HepG2 (cell line): ENCODE measurements at regions of chr6 and their contacts with region 1.

Region 1: GRCh38 chr6:43228951-43229802 is at the start of gene DNPH1:
- DNase-seq: peak; percentile 59
- ATAC-seq: peak; percentile 95
- H3K4me3 ChIP-seq: peak within 1 kb of the TSS; percentile 69 to 82 (median 81)
- H3K27ac ChIP-seq: peak within 1 kb of the TSS; percentile 49
- H3K4me1 ChIP-seq: peaks cover 27% of the 10 kb centered on the region
- H3K27me3 ChIP-seq: peaks cover 0 to 18% of the 10 kb centered on the region in 2 experiments; a peak in 2 of 5 replicates
- CTCF ChIP-seq: peak; percentile 88
- EP300 ChIP-seq: 0 out of 4 replicates have a peak, but pooled peaks of 1 of the 2 experiments have one; percentile 24
- POLR2A ChIP-seq: peak; percentile 79 to 84
- RAD21 ChIP-seq: peak; percentile 97
- total RNA-seq, gene DNPH1: 75.0 and 75.1 TPM in 2 replicates

Region 2: GRCh38 chr6:43174263-43175112 is 54.7 kb before region 1 on chr6:
- CTCF ChIA-PET with region 1: no interaction called
- POLR2A ChIA-PET with region 1: interaction called, 12 read pairs
- in situ Hi-C with region 1: no loop called
- intact Hi-C with region 1: loop called (anchors 1 kb)
- DNase-seq: peak; percentile 99
- ATAC-seq: peak; percentile 76
- H3K4me3 ChIP-seq: peak overlapping the region; percentile 3 to 97 (median 95); a peak in 4 of 6 replicates
- H3K27ac ChIP-seq: peak overlapping the region; percentile 57
- H3K4me1 ChIP-seq: peaks cover 37% of the 10 kb centered on the region
- H3K27me3 ChIP-seq: no peaks in the 10 kb centered on the region; a peak in 1 of 5 replicates
- CTCF ChIP-seq: peak; percentile 39
- EP300 ChIP-seq: no peak
- POLR2A ChIP-seq: peak in 1 of 2 experiments; percentile 60; a peak in 1 of 4 replicates
- RAD21 ChIP-seq: peak; percentile 49; the same call in 1 of the 2 replicates

Region 3: DNA sequence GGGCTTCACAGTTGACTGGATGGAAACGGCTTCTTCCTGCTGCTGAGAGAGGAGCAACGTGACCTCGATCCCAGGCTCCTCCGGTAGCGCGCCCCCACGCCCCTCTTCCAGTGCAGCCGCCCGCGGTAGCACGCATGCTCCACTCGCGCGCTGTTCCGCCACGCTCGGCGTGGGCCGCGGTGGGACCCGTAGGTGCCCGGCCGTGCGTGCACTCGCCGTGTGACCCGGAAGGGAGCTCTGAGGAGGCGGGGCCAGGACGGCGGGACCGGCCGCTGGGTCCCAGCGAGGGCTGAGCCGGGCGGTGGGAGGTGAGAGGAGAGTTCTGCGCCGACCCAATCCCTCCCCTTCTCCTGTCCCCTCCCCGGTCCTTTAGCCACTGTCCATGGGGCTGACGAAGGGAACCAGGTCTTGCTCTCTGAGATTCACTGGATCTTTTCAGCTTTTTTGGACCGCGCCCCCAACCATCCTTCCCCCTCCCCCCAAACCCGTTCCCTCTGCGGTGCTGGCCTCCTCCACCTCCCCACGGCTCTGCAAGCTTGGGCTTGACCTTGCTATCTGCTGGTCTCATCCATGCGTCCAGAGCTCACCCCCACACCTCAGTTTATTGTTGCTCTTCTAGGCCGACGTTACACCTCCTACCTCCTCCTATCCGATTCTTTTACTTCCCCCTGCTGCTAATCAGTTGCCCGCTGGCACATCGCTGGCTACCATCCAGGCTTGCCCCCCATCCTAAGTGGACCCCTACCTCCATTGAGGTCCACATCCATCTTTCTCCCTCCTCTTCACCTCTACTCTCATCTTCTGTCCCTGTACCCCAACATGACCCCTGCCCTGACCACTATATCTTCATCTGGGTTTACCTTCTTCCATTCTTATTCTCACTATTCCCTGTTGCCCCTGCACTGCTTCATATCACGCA is 47.0 kb before region 1 on chr6 and contains the start of gene CUL9:
- CTCF ChIA-PET with region 1: no interaction called
- POLR2A ChIA-PET with region 1: interaction called, 11 read pairs
- in situ Hi-C with region 1: no loop called
- intact Hi-C with region 1: no loop called
- DNase-seq: peak; percentile 60
- ATAC-seq: peak; percentile 95
- H3K4me3 ChIP-seq: peak within 1 kb of the TSS; percentile 73 to 83 (median 78)
- H3K27ac ChIP-seq: peak within 1 kb of the TSS; percentile 58
- H3K4me1 ChIP-seq: peaks cover 22% of the 10 kb centered on the region
- H3K27me3 ChIP-seq: no peaks in the 10 kb centered on the region; a peak in 1 of 5 replicates
- CTCF ChIP-seq: peak; percentile 56
- EP300 ChIP-seq: peak in 1 of 2 experiments; percentile 23; a peak in 1 of 4 replicates
- POLR2A ChIP-seq: peak; percentile 62 to 86; a peak in 3 of 4 replicates
- RAD21 ChIP-seq: peak; percentile 69
- total RNA-seq, gene CUL9: 10.5 and 11.4 TPM in 2 replicates

Region 4: DNA sequence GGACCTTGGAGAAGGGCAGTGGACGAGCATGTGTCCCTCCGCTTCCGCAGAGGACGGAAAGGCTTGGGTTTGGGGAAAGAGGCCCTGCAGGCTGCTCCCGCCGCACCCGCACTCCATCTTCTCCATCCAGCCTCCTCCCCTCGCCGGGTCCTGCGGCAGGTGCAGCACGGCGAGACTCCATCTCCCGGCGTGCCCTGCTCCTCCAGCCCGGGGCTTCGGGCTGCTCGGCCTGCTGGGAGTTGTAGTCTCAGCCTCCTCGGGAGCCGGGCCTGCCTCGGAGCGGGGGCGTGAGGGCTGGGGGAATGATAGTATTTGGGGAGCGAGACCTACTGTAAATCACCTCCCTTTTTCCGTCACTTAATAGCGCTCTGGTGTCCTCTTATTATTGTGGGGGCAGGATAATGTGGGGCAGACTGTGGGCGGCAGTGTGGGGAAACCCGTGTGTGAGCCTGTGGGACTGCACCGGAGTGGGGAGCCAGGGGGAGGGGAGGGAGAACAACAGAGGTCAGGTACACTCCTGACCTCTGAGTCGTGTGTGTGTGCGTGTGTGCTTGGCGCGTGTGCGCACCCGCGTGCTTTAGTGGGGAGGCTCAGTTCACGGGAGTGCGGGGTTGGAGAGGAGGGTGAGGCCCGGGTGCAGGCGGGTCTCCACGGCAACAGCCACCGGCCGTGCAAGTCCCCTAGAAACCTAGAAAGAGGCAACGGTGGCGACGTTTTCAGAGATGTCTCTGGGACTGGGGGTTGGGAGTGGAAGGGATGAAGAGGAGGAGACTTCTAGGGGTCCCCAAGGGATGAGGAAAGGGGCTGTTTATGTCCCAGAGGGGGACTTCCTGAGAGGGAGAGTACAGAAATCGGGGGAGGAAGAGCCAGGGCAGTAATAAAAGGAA is 18.2 kb after region 1 on chr6:
- CTCF ChIA-PET with region 1: no interaction called
- POLR2A ChIA-PET with region 1: interaction called, 12 read pairs
- in situ Hi-C with region 1: no loop called
- intact Hi-C with region 1: no loop called
- DNase-seq: peak; percentile 58
- ATAC-seq: peak; percentile 96
- H3K4me3 ChIP-seq: peak overlapping the region; percentile 48 to 75 (median 58)
- H3K27ac ChIP-seq: no peak overlapping the region
- H3K4me1 ChIP-seq: peaks cover 38% of the 10 kb centered on the region
- H3K27me3 ChIP-seq: peaks cover 17 to 79% of the 10 kb centered on the region in 2 experiments
- CTCF ChIP-seq: peak; percentile 35
- EP300 ChIP-seq: 0 out of 4 replicates have a peak, but pooled peaks of 1 of the 2 experiments have one; percentile 13
- POLR2A ChIP-seq: no peak
- RAD21 ChIP-seq: no peak; the same call in 1 of the 2 replicates

Region 5: GRCh38 chr6:43355862-43356590 is 126.8 kb after region 1 on chr6:
- CTCF ChIA-PET with region 1: interaction called, 13 read pairs
- POLR2A ChIA-PET with region 1: no interaction called
- in situ Hi-C with region 1: no loop called
- intact Hi-C with region 1: no loop called
- DNase-seq: peak; percentile 64
- ATAC-seq: peak; percentile 99
- H3K4me3 ChIP-seq: no peak overlapping the region
- H3K27ac ChIP-seq: no peak overlapping the region
- H3K4me1 ChIP-seq: peaks cover 2% of the 10 kb centered on the region
- H3K27me3 ChIP-seq: no peaks in the 10 kb centered on the region
- CTCF ChIP-seq: peak; percentile 91
- EP300 ChIP-seq: no peak
- POLR2A ChIP-seq: no peak
- RAD21 ChIP-seq: peak; percentile 86